SK-N-SH (cell line): ENCODE measurements at regions of chr16 and their contacts with region 1.

Region 1: GRCh38 chr16:88672776-88673175 is 9.9 kb upstream of the MVD start:
- DNase-seq: peak; percentile 71
- H3K4me3 ChIP-seq: no peak overlapping the region
- H3K27ac ChIP-seq: no peak overlapping the region
- H3K4me1 ChIP-seq: no peaks in the 10 kb centered on the region
- H3K27me3 ChIP-seq: no peaks in the 10 kb centered on the region
- CTCF ChIP-seq: peak; percentile 39
- EP300 ChIP-seq: no peak
- RAD21 ChIP-seq: peak; percentile 47

Region 2: GRCh38 chr16:88686439-88687253 is 13.9 kb after region 1 on chr16 and contains the start of gene SNAI3:
- CTCF ChIA-PET with region 1: interaction called, 12 read pairs
- POLR2A ChIA-PET with region 1: interaction called, 3 read pairs
- DNase-seq: peak; percentile 97
- H3K4me3 ChIP-seq: peak within 1 kb of the TSS; percentile 51 to 73
- H3K27ac ChIP-seq: no peak within 1 kb of the TSS
- H3K4me1 ChIP-seq: peaks cover 5 to 12% of the 10 kb centered on the region in 2 experiments; a peak in 2 of 4 replicates
- H3K27me3 ChIP-seq: no peaks in the 10 kb centered on the region; the same call in 1 of the 2 replicates
- CTCF ChIP-seq: no peak
- EP300 ChIP-seq: no peak
- RAD21 ChIP-seq: no peak
- polyA plus RNA-seq, gene SNAI3: 0.03 and 0.18 TPM in 2 replicates